Activated T-helper 2 cell treated with anti-CD3 and anti-CD28 coated beads, Interferon-gamma antibody, Interleukin-2, Interleukin-4, amounts not matched to agents 10 μg/mL and 5 μg/mL and 100 μg/mL, durations not matched to agents 14 hours and 24 hours and 36 hours (primary cell): ENCODE measurements at regions of chr20 and their contacts with region 1.

Region 1: GRCh38 chr20:56629670-56630478 is 768 bp downstream of the TFAP2C start:
- DNase-seq: no peak
- H3K4me3 Mint-ChIP-seq: peak overlapping the region; percentile 17
- H3K27ac Mint-ChIP-seq: no peak overlapping the region
- H3K4me1 Mint-ChIP-seq: peaks cover 7% of the 10 kb centered on the region
- H3K27me3 Mint-ChIP-seq: peaks cover 69% of the 10 kb centered on the region

Region 2: DNA sequence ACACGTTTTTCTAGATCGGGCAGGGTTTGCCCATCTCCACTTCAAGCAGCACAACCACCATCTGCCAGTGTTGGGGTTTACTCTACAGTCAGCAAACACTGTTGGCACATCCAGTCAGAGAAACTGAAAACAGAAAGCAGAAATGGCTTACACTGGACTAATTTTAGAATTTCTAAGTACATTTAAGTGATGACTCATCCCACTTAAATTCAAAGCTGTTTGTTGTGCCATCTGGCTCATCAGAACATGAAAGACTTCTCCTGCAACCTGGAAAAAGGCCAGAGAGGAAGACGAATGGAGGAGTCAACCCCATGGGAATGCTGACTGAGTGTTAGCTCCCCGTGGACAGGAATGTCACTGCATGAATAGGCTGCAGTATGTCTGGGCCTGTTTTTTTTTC is 75.0 kb before region 1 on chr20:
- intact Hi-C with region 1: loop called (anchors 5 kb)
- DNase-seq: no peak
- H3K4me3 Mint-ChIP-seq: no peak overlapping the region
- H3K27ac Mint-ChIP-seq: no peak overlapping the region
- H3K4me1 Mint-ChIP-seq: peaks cover 8% of the 10 kb centered on the region
- H3K27me3 Mint-ChIP-seq: peaks cover 3% of the 10 kb centered on the region

Region 3: DNA sequence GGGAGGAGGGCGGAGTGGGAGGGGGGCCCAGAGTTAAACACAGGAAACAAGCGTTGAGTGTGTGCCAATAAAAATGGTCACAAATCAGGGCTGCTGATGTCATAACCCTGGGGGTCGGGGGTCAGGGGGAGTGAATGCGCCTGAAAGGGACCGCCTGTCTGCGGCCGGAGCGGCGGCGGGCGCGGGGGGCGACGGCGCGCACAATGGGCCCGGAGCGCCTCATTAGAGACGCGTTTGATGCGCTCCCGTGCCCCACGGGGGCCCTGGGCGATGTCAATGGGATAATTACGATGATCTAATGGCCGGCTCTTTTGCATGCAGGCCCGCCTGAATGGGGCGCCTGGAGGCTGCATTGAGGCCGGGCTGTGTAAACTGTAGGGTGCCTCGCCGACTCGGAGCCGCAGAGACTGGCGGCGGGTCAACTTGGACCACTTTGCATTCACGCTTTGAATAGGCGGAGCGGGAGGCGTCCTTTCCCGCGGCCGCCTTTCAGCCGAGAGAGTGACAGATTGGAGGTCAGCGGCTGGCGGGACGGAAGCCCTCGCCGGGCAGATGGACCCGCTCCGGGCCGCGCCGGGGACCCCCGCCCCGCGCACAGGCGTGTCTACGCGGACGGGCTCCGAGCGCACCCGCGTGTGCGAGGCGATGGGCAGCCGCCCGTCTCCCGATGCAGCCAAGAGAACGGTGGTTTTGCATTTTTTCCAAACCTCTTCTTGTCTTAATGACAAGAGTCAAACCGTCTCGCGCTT is 295.4 kb after region 1 on chr20:
- intact Hi-C with region 1: loop called (anchors 2 kb)
- DNase-seq: no peak
- H3K4me3 Mint-ChIP-seq: no peak overlapping the region
- H3K27ac Mint-ChIP-seq: no peak overlapping the region
- H3K4me1 Mint-ChIP-seq: no peaks in the 10 kb centered on the region
- H3K27me3 Mint-ChIP-seq: peaks cover 72% of the 10 kb centered on the region

Region 4: DNA sequence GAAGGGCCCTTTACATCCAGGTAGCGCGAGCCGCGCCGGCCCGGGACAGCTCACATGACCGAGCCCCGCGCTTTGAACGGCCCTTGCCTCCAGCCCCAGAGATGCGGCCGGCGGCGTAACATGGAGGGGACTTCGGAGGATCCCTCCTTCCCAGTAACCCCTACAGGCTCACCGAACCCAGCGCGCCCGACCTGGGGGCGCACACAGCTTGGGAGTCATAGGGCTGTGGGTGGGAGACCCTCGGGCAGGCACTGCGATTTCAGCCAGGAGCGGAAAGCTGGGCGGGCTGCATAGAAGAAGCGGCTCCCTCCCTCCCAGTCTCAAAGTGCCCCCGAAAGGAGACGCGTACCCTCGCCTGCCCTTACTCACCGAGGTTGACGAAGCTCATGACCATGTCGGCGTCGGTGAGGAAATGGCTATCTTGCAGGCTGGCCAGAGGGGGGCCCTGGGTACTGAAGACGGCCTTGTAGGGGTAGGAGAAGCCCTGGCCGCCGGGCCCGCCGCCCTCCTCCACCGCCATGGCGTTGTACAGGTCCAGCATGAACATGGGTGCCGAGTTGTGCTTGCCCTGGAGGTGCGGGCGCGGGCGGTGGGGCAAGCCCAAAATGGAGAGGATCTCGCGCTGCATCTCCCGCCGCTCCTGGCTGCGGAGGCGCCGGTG is 635.6 kb after region 1 on chr20:
- intact Hi-C with region 1: loop called (anchors 2 kb)
- DNase-seq: no peak
- H3K4me3 Mint-ChIP-seq: no peak overlapping the region
- H3K27ac Mint-ChIP-seq: no peak overlapping the region
- H3K4me1 Mint-ChIP-seq: peaks cover 9% of the 10 kb centered on the region
- H3K27me3 Mint-ChIP-seq: peaks cover 75% of the 10 kb centered on the region